Naive thymus-derived CD4-positive, alpha-beta T cell (primary cell): ENCODE measurements at regions of chr17 and their contacts with region 1.

Region 1: GRCh38 chr17:49567871-49568694 is 7.6 kb upstream of the NXPH3 start:
- DNase-seq: peak; percentile 50 to 88 (median 72)
- ATAC-seq: peak; percentile 64
- H3K4me3 ChIP-seq: peak overlapping the region; percentile 15
- H3K4me3 Mint-ChIP-seq: peak overlapping the region; percentile 53 to 80 (median 70)
- H3K27ac ChIP-seq: no peak overlapping the region
- H3K27ac Mint-ChIP-seq: peak overlapping the region in 1 of 9 donors; percentile 7
- H3K4me1 ChIP-seq: peaks cover 6 to 7% of the 10 kb centered on the region in 2 donors
- H3K4me1 Mint-ChIP-seq: peaks cover 0 to 28% (median 15%) of the 10 kb centered on the region in 7 donors
- H3K27me3 ChIP-seq: no peaks in the 10 kb centered on the region
- H3K27me3 Mint-ChIP-seq: peaks cover under 1 to 38% (median 4%) of the 10 kb centered on the region in 5 donors

Region 2: DNA sequence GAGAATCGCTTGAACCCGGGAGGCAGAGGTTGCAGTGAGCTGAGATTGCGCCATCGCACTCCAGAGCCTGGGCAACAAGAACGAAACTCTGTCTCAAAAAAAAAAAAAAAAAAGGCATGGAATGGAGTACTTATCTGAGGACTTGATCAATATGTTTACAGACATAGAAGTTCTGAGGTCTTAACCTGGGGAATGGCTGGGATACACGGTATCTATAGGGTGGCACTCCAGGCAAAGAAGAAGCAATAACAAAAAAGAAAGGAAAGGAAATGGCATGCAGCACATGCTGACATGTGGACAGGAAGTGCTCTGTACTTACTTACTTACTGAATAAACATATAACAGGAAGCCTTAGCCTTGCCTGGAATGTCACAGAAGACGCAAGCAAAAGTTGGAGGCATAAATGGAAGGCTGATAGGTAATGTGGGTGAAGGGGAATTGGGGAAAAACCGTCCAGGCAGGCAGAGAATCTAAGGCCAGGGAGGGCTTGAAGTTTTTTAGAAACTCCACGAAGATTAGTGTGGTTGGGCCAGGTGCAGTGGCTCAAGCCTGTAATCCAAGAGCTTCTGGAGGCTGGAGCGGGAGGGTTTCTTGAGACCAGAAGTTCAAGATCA is 119.9 kb after region 1 on chr17:
- CTCF ChIA-PET with region 1: interaction called, 15 read pairs
- POLR2A ChIA-PET with region 1: no interaction called
- intact Hi-C with region 1: no loop called
- DNase-seq: peak in 7 of 9 donors; percentile 44 to 67 (median 56)
- ATAC-seq: peak; percentile 85
- H3K4me3 ChIP-seq: peak overlapping the region; percentile 67
- H3K4me3 Mint-ChIP-seq: peak overlapping the region; percentile 86 to 100 (median 90)
- H3K27ac ChIP-seq: peak overlapping the region; percentile 80
- H3K27ac Mint-ChIP-seq: peak overlapping the region; percentile 95 to 99 (median 98)
- H3K4me1 ChIP-seq: peaks cover 21 to 43% of the 10 kb centered on the region in 2 donors
- H3K4me1 Mint-ChIP-seq: peaks cover 28 to 67% (median 53%) of the 10 kb centered on the region in 7 donors
- H3K27me3 ChIP-seq: no peaks in the 10 kb centered on the region
- H3K27me3 Mint-ChIP-seq: no peaks in the 10 kb centered on the region

Region 3: DNA sequence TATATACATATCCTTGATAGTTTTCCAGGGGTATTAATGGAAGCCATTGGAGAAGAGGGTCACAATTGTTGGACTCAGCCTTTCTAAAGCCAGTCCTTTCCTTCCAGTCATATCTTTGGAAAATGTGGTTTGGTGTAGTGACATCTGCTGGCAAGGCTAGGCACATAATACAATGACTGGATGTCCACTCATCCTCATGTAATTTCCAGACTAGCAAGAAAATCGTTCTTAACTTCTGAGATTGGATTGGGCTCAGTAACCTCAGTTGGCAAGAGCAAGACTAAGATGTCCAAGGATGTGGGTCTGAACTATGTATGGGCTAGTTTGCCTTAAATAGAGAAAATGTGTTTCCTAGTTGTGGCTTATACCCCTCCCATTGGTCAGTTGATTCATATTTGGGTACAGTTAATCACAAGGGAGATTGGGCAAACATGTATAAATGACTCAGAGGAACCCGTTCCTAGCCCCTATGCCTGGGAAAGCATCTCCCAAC is 211.7 kb after region 1 on chr17:
- CTCF ChIA-PET with region 1: interaction called, 7 read pairs
- POLR2A ChIA-PET with region 1: interaction called, 3 read pairs
- intact Hi-C with region 1: loop called in 1 of 2 experiments (anchors 1 kb)
- DNase-seq: peak in 4 of 9 donors; percentile 14 to 33 (median 24)
- ATAC-seq: peak; percentile 62
- H3K4me3 ChIP-seq: no peak overlapping the region
- H3K4me3 Mint-ChIP-seq: no peak overlapping the region
- H3K27ac ChIP-seq: no peak overlapping the region
- H3K27ac Mint-ChIP-seq: no peak overlapping the region
- H3K4me1 ChIP-seq: no peaks in the 10 kb centered on the region
- H3K4me1 Mint-ChIP-seq: peaks cover 0 to 11% (median 5%) of the 10 kb centered on the region in 7 donors
- H3K27me3 ChIP-seq: no peaks in the 10 kb centered on the region
- H3K27me3 Mint-ChIP-seq: peaks cover 0 to 7% (median 0%) of the 10 kb centered on the region in 5 donors